HepG2 (cell line): ENCODE measurements at regions of chr3 and their contacts with region 1.

Region 1: DNA sequence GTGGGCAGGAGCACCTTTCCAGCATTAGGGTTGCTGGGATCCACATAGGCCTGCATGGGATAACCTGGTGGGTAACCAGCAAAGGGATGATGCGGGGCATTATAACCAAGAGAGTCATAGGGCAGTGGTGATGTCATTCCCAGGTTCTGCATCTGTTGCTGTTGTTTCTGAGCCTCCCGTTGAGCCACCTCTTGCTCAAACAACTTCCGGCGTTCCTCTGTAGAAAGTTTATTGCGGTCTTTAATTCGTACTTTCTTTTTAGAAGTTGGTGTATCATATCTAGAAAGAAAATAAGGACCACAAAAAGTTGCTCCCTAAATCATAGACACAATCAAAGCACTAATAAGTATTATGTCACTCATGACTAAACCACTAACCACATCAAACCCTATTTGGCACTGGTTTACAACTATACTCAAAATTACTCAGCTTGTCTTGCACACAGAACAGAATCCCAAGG is 77.8 kb downstream of the NBEAL2 start:
- DNase-seq: no peak
- ATAC-seq: no peak
- H3K4me3 ChIP-seq: no peak overlapping the region
- H3K27ac ChIP-seq: no peak overlapping the region
- H3K4me1 ChIP-seq: no peaks in the 10 kb centered on the region
- H3K27me3 ChIP-seq: no peaks in the 10 kb centered on the region
- CTCF ChIP-seq: no peak
- EP300 ChIP-seq: no peak
- POLR2A ChIP-seq: no peak
- RAD21 ChIP-seq: no peak

Region 2: GRCh38 chr3:46909535-46910442 is 147.5 kb before region 1 on chr3:
- CTCF ChIA-PET with region 1: no interaction called
- POLR2A ChIA-PET with region 1: no interaction called
- in situ Hi-C with region 1: no loop called
- intact Hi-C with region 1: no loop called
- DNase-seq: peak; percentile 75
- ATAC-seq: peak; percentile 88
- H3K4me3 ChIP-seq: peak overlapping the region in 1 of 3 experiments; percentile 22; a peak in 1 of 6 replicates
- H3K27ac ChIP-seq: no peak overlapping the region
- H3K4me1 ChIP-seq: peaks cover 10% of the 10 kb centered on the region
- H3K27me3 ChIP-seq: peaks cover 0 to 23% of the 10 kb centered on the region in 2 experiments; a peak in 3 of 5 replicates
- CTCF ChIP-seq: peak; percentile 95
- EP300 ChIP-seq: no peak
- POLR2A ChIP-seq: no peak
- RAD21 ChIP-seq: peak; percentile 88

Region 3: GRCh38 chr3:47042231-47042791 is 14.9 kb before region 1 on chr3:
- CTCF ChIA-PET with region 1: no interaction called
- POLR2A ChIA-PET with region 1: no interaction called
- in situ Hi-C with region 1: no loop called
- intact Hi-C with region 1: loop called (anchors 1 kb)
- DNase-seq: no peak
- ATAC-seq: no peak
- H3K4me3 ChIP-seq: no peak overlapping the region
- H3K27ac ChIP-seq: no peak overlapping the region
- H3K4me1 ChIP-seq: no peaks in the 10 kb centered on the region
- H3K27me3 ChIP-seq: no peaks in the 10 kb centered on the region
- CTCF ChIP-seq: no peak
- EP300 ChIP-seq: no peak
- POLR2A ChIP-seq: no peak
- RAD21 ChIP-seq: no peak